ENCODE measurements at regions of chr13 and their contacts with region 1.

Region 1: GRCh38 chr13:109427148-109427547 is 359.2 kb downstream of the IRS2 start:
- DNase-seq: peak; percentile 61
- H3K4me3 ChIP-seq: no peak overlapping the region
- H3K27ac ChIP-seq: peak overlapping the region; percentile 99
- H3K4me1 ChIP-seq: peaks cover 27% of the 10 kb centered on the region
- H3K27me3 ChIP-seq: no peaks in the 10 kb centered on the region
- CTCF ChIP-seq: no peak

Region 2: DNA sequence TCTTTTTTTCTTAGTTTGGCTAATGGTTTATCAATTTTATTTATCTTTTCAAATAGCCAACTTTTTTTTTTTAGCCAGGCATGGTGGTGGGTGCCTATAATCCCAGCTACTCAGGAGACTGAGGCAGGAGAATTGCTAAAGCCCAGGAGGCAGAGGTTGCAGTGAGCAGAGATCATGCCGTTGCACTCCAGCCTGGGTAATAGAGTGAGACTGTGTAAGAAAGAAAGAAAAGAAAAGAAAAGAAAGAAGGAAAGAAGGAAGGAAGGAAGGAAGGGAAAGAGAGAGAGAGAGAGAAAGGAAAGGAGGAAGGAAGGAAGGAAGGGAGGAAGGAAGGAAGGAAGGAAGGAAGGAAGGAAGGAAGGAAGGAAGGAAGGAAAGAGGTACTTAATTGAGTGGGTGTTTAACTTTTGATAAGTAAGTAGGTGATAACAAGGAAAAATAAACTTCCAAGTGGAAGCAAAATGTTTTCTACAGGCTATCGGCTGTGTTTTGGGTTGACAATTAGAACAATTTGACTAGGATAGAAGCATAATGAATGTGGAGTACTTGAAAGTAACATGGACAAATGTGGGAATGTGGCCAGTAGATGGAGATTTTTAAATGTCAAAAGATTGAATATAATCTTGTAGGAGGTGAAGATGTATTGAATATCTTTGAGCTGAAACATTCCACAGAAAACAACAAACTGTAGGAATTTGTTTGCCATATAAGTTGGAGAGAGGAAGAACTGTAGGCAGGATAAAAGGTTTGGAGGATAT is 860.6 kb before region 1 on chr13:
- CTCF ChIA-PET with region 1: no interaction called
- POLR2A ChIA-PET with region 1: no interaction called
- intact Hi-C with region 1: loop called (anchors 5 kb)
- DNase-seq: peak; percentile 61
- H3K4me3 ChIP-seq: no peak overlapping the region
- H3K27ac ChIP-seq: peak overlapping the region; percentile 58
- H3K4me1 ChIP-seq: peaks cover 7% of the 10 kb centered on the region
- H3K27me3 ChIP-seq: no peaks in the 10 kb centered on the region
- CTCF ChIP-seq: no peak

Region 3: DNA sequence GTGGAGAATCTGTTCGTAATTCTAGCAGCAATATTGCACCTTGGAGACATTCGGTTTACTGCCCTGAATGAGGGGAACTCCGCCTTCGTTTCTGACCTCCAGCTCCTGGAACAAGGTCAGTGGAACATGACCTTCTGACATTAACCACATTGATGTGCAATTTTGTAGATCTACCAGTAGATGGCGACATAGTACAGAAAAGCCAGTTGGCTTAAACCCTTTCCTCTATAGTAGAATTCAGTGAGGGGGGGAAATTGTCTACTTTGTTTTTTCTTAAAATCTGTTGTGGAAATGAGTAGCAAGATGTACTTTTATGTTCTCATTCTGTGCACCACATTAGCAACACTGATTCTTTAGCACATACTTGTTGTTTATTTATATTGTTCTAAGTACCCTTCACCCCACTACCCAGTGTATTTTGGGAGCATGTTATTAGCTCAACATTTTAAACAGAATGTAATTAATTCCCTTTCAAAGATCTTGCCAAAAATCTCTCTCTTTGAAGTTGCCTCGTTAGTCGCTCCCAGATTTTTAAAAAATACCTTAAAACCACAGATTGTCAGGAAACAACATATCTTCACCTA is 465.5 kb before region 1 on chr13:
- CTCF ChIA-PET with region 1: no interaction called
- POLR2A ChIA-PET with region 1: no interaction called
- intact Hi-C with region 1: loop called (anchors 1 kb)
- DNase-seq: peak; percentile 83
- H3K4me3 ChIP-seq: no peak overlapping the region
- H3K27ac ChIP-seq: peak overlapping the region; percentile 61
- H3K4me1 ChIP-seq: peaks cover 55% of the 10 kb centered on the region
- H3K27me3 ChIP-seq: no peaks in the 10 kb centered on the region
- CTCF ChIP-seq: peak; percentile 83

Region 4: GRCh38 chr13:109145631-109146030 is 281.5 kb before region 1 on chr13:
- CTCF ChIA-PET with region 1: no interaction called
- POLR2A ChIA-PET with region 1: no interaction called
- intact Hi-C with region 1: loop called (anchors 1 kb)
- DNase-seq: peak; percentile 93
- H3K4me3 ChIP-seq: no peak overlapping the region
- H3K27ac ChIP-seq: peak overlapping the region; percentile 80
- H3K4me1 ChIP-seq: peaks cover 64% of the 10 kb centered on the region
- H3K27me3 ChIP-seq: no peaks in the 10 kb centered on the region
- CTCF ChIP-seq: peak; percentile 92

Region 5: DNA sequence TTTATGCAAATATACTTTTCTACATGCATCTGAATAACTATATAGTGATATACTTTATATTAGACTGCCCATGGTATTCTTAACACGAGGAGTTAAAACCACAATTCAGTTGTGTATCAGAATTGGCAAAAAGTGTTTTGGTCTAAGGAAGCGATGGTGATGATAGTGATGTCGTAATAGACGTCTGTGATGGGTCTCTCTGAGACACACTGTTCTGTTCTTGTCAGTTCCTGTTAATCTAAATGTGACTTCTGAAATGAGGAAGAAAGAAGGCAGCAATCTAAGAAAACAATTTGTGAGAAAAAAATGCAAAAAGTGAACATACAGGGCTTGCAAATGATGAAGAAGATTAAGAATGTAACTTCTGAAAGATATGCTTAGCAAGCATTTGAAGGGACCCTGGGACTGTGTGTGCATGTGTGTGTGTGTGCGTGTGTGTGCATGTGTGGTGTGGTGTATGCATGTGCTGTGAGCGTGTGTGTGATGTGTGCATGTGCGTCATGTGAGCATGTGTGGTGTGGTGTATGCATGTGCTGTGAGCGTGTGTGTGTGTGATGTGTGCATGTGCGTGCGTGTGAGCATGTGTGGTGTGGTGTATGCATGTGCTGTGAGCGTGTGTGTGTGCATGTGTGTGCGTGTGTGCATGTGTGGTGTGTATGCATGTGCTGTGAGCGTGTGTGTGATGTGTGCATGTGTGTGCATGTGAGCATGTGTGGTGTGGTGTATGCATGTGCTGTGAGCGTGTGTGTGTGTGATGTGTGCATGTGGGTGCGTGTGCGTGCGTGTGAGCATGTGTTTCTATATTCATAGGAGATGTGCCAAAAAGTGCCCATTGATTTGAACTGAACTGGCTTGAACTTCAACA is 227.4 kb after region 1 on chr13:
- CTCF ChIA-PET with region 1: no interaction called
- POLR2A ChIA-PET with region 1: interaction called, 4 read pairs
- intact Hi-C with region 1: loop called (anchors 1 kb)
- DNase-seq: peak; percentile 63
- H3K4me3 ChIP-seq: no peak overlapping the region
- H3K27ac ChIP-seq: peak overlapping the region; percentile 94
- H3K4me1 ChIP-seq: peaks cover 67% of the 10 kb centered on the region
- H3K27me3 ChIP-seq: no peaks in the 10 kb centered on the region
- CTCF ChIP-seq: no peak

Region 6: DNA sequence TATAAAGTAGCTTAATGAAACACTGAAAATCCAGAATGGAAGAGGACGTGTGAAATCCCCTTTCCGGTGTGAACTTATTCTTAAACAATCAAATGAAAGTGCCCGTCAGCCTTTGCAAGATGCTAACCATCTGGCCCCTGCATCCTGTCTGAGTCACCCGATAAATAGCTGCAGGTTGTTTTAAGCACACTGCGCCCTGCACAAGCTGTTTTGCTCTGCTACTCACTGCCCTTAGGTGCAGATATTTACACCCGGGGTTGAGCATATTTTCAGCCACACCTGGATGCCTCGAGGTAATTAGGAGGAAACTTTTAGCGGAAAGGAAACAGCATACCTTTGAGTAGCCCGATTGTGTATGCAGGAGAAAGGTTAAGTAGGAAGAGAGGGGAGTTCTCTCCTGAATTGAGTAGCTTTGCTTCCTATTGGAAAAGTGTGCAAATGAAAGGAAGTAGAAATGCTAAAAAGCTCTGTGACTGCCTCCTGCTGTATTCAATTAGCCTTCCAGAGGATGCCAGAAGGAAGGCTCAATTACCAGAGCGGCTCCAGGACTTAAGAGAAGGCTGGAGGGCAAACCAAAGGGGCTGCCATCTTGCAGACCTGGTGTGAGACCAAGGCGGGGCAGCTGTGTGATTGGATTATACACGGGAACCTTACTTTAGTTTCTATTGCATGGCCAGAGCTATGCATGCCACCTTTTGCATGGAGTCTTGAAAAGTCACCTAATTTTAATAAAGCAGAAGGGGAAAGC is 316.7 kb after region 1 on chr13:
- CTCF ChIA-PET with region 1: interaction called, 4 read pairs
- POLR2A ChIA-PET with region 1: no interaction called
- intact Hi-C with region 1: loop called (anchors 1 kb)
- DNase-seq: peak; percentile 92
- H3K4me3 ChIP-seq: peak overlapping the region; percentile 0
- H3K27ac ChIP-seq: peak overlapping the region; percentile 70
- H3K4me1 ChIP-seq: peaks cover 39% of the 10 kb centered on the region
- H3K27me3 ChIP-seq: no peaks in the 10 kb centered on the region
- CTCF ChIP-seq: peak; percentile 31; the same call in 1 of the 2 replicates

Region 7: GRCh38 chr13:110108347-110109174 is 681.4 kb after region 1 on chr13:
- CTCF ChIA-PET with region 1: no interaction called
- POLR2A ChIA-PET with region 1: no interaction called
- intact Hi-C with region 1: loop called (anchors 1 kb)
- DNase-seq: peak; percentile 85
- H3K4me3 ChIP-seq: no peak overlapping the region
- H3K27ac ChIP-seq: no peak overlapping the region
- H3K4me1 ChIP-seq: peaks cover 12% of the 10 kb centered on the region
- H3K27me3 ChIP-seq: no peaks in the 10 kb centered on the region
- CTCF ChIP-seq: peak; percentile 76